ENCODE measurements at regions of chr22 and their contacts with region 1.

Region 1: DNA sequence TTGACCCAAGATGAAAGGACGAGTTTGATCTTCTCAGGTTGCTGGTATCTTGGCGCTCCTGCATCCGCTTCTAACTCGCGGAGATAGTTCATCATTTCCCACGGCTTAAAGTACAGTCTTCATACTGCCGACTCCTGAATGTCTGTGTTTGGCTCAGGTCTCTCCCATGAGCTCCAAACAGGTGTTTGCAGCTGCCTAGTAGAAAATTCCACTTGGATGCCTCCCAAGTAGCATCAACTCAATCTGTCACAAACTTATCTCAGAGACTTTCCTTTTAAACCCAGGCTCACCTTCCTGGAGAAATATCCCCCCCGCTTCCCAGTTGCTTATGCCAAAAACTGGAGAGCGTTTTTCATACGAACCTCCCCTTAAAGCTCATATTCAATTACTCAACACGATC is 986.5 kb downstream of the TBC1D22A start:
- DNase-seq: no peak
- ATAC-seq: no peak
- H3K4me3 ChIP-seq: no peak overlapping the region
- H3K27ac ChIP-seq: no peak overlapping the region
- H3K4me1 ChIP-seq: no peaks in the 10 kb centered on the region
- H3K27me3 ChIP-seq: no peaks in the 10 kb centered on the region; the same call in 1 of the 2 replicates
- CTCF ChIP-seq: no peak

Region 2: GRCh38 chr22:47713941-47714340 is 35.0 kb before region 1 on chr22:
- CTCF ChIA-PET with region 1: no interaction called
- POLR2A ChIA-PET with region 1: interaction called, 10 read pairs
- in situ Hi-C with region 1: no loop called
- intact Hi-C with region 1: no loop called
- DNase-seq: no peak
- ATAC-seq: no peak
- H3K4me3 ChIP-seq: no peak overlapping the region
- H3K27ac ChIP-seq: no peak overlapping the region
- H3K4me1 ChIP-seq: no peaks in the 10 kb centered on the region
- H3K27me3 ChIP-seq: no peaks in the 10 kb centered on the region
- CTCF ChIP-seq: no peak

Region 3: DNA sequence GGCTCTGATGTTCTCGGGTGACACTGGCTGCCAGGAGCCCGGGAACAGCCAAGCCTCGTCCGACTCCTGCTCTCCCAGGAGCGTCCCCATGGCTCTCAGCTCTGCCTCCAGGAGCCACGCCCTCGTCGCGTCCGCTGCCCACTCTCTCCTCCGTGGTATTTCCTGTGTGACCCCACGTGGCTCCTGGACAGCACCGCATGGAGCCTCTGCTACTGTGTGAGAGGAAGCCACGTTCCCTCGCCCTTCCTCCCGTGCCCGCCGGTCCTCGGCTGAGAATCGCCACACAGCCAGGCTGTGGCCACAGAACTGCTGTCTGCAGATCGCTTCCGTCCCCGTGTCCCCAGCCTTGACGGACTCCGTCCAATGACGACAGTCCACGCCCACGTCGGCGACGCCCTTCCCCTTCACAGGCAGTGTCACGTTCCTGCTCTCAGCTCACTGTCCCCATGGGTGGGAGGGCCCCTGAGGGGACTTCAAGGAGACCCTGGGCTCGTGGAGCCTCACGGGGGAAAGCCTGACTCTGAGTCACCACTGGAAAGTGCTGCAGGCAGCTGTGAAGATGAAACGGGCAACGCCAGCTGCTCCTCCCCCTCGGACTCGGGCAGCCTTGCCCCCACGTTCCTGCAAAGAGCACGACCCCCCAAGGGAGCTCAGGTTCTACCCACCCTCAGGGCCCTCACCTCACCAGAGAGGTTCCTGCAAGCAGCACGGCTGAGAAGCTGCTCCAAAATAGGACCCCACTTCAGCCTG is 1620.2 kb after region 1 on chr22:
- CTCF ChIA-PET with region 1: no interaction called
- POLR2A ChIA-PET with region 1: no interaction called
- in situ Hi-C with region 1: no loop called
- intact Hi-C with region 1: no loop called
- DNase-seq: no peak
- ATAC-seq: peak; percentile 68
- H3K4me3 ChIP-seq: peak overlapping the region; percentile 4 to 24; a peak in 3 of 4 replicates
- H3K27ac ChIP-seq: no peak overlapping the region
- H3K4me1 ChIP-seq: no peaks in the 10 kb centered on the region; the same call in 1 of the 2 replicates
- H3K27me3 ChIP-seq: no peaks in the 10 kb centered on the region
- CTCF ChIP-seq: no peak

Measured in Panc1 (cell line).